Right cardiac atrium (tissue), 5 donors: ENCODE measurements at regions of chr17 and their contacts with region 1.

Region 1: DNA sequence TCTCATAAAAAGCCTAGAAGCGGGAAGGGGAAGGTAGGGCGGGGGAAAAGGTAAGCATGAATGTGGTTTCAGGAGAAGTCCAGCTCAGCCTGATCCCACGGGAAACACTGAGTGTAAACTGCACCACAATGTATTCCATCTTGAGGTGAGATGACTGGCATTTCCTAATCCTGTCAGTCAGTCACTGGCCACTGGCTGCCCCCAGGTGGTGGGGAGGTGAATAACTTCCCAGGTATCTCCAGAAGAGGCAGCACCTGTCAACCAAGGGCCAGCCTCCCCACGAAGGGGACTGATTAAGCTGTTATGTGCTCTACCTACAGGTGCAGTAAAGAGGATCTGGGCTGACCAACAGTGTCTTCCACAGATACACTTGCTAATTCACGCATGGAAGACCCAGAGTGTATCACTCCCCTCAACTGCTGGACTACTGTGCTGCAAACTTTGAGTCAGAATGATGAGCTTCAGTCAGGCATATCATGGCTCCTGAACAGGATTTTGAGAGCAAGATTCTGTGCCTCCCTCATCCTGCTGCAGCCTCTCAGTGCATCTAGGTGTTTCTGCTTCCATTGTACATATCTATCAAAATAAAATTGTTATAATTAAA is 108.5 kb upstream of the CCL2 start:
- DNase-seq: peak; percentile 33 to 74 (median 61)
- ATAC-seq: peak; percentile 26 to 46
- H3K4me3 ChIP-seq: no peak overlapping the region
- H3K27ac ChIP-seq: no peak overlapping the region
- H3K4me1 ChIP-seq: no peaks in the 10 kb centered on the region
- H3K27me3 ChIP-seq: peaks cover 3% of the 10 kb centered on the region

Region 2: GRCh38 chr17:33927732-33928133 is 218.8 kb before region 1 on chr17:
- intact Hi-C with region 1: loop called in 3 of 4 experiments (anchors 5 to 10 kb)
- DNase-seq: no peak
- ATAC-seq: no peak
- H3K4me3 ChIP-seq: no peak overlapping the region
- H3K27ac ChIP-seq: no peak overlapping the region
- H3K4me1 ChIP-seq: no peaks in the 10 kb centered on the region
- H3K27me3 ChIP-seq: no peaks in the 10 kb centered on the region